ENCODE measurements at regions of chr2 and their contacts with region 1.

Region 1: GRCh38 chr2:121356058-121356640 is 71.1 kb upstream of the TFCP2L1 start:
- DNase-seq: peak; percentile 63 to 83 (median 75)
- H3K4me3 ChIP-seq: no peak overlapping the region
- H3K27ac ChIP-seq: no peak overlapping the region
- H3K4me1 ChIP-seq: no peaks in the 10 kb centered on the region
- H3K27me3 ChIP-seq: no peaks in the 10 kb centered on the region

Region 2: GRCh38 chr2:121076885-121077549 is 279.1 kb before region 1 on chr2:
- CTCF ChIA-PET with region 1: interaction called, 96 read pairs
- POLR2A ChIA-PET with region 1: interaction called, 3 read pairs
- DNase-seq: peak; percentile 55 to 63 (median 61)
- H3K4me3 ChIP-seq: no peak overlapping the region
- H3K27ac ChIP-seq: no peak overlapping the region
- H3K4me1 ChIP-seq: no peaks in the 10 kb centered on the region
- H3K27me3 ChIP-seq: peaks cover 0 to 52% (median 29%) of the 10 kb centered on the region in 5 experiments

Region 3: GRCh38 chr2:121088251-121089165 is 267.6 kb before region 1 on chr2:
- CTCF ChIA-PET with region 1: interaction called, 96 read pairs
- POLR2A ChIA-PET with region 1: no interaction called
- DNase-seq: no peak
- H3K4me3 ChIP-seq: no peak overlapping the region
- H3K27ac ChIP-seq: no peak overlapping the region
- H3K4me1 ChIP-seq: no peaks in the 10 kb centered on the region
- H3K27me3 ChIP-seq: peaks cover 0 to 4% (median 0%) of the 10 kb centered on the region in 5 experiments

Region 4: DNA sequence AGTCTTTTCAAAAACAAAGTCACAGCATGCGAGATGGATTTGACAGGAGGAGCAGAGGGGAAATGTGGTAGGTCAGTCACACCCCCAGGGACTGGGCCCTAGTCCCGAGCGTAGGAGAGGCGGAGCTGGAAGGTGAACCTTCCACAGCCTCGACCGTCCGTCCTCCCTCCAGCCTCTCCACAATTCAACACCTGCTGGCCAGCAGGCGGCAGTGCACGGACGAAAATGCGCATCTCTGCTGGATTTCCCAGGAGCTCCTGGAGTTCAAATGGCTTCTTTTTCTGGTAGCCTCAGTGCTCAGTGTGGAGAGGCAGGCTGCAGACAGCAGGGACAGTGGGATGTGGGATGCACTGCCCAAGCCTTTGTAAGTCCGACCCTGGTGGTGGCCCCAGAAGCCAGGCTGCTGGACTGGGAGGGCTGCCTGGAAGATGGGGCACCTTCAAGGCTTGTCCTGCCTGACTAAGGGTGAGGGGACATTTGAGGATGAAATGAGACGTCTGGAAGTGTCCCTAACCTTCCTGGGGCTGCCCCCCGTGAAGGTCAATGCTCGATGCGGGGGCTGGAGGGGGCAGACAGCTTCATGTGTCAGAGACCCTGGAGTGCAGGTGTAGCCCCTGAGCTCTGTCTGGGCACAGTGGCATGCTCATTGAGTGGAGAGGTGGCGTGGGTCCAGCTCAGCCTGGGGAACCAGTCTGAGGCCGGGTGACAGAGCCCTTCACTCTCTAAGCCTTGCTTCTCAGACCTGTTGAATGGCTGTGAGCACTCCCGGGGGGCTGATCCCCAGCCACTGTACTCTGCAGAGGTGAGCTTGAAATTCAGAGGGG is 260.7 kb before region 1 on chr2:
- CTCF ChIA-PET with region 1: interaction called, 57 read pairs
- POLR2A ChIA-PET with region 1: no interaction called
- DNase-seq: peak; percentile 43 to 67 (median 61)
- H3K4me3 ChIP-seq: no peak overlapping the region
- H3K27ac ChIP-seq: no peak overlapping the region
- H3K4me1 ChIP-seq: no peaks in the 10 kb centered on the region
- H3K27me3 ChIP-seq: peaks cover 0 to 5% (median 1%) of the 10 kb centered on the region in 5 experiments

Region 5: DNA sequence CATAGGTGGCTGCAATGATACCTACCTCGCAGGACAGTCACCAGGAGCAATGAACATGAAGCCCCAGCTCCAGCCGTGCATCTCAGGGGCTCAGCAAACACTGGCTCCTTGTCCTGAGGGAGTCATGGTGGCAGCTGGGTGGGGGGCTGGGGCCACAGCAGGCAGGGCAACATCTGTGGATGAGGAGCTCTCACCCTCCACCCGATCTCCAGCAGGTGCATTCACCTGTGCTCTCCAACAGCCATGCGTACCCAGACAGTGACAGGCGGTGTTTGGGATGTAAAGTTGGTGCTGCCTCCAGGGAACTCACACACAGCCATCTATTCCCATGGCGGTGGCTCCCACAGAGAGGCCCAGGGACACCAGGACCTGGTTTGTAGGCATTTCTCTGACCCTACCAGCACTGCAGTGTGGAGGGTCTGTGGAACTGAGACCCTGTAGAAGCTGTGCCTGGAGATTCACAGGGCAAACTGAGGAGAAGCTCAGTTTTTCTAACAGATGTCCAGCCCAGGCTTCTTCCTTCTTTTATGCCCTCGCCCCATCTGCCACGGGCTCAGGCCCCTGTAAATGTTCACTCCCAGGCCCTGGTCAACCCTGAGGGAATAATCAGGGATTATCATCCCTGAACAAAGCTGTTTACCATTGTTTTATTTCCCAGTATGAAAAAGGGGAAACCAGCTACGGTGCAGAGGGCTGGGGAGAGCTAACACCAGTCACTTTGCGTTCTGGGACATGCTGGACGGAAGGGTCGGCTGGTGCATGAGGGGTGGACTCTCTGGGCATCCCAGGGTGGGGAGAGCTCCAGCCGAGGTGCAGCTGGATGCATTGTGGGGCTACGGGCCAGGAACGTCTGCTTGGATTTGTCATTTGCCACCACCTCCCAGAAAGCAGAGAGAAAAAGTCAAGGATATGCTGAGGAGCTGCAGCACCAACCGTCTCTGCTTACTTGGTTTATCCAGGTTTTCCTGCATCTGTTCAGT is 255.1 kb before region 1 on chr2:
- CTCF ChIA-PET with region 1: interaction called, 57 read pairs
- POLR2A ChIA-PET with region 1: no interaction called
- DNase-seq: no peak
- H3K4me3 ChIP-seq: no peak overlapping the region
- H3K27ac ChIP-seq: no peak overlapping the region
- H3K4me1 ChIP-seq: no peaks in the 10 kb centered on the region
- H3K27me3 ChIP-seq: peaks cover 0 to 7% (median 0%) of the 10 kb centered on the region in 5 experiments

Region 6: GRCh38 chr2:121128754-121129659 is 227.1 kb before region 1 on chr2:
- CTCF ChIA-PET with region 1: interaction called, 44 read pairs
- POLR2A ChIA-PET with region 1: no interaction called
- DNase-seq: peak; percentile 37 to 83 (median 77)
- H3K4me3 ChIP-seq: no peak overlapping the region
- H3K27ac ChIP-seq: no peak overlapping the region
- H3K4me1 ChIP-seq: peaks cover 0 to 13% (median 2%) of the 10 kb centered on the region in 4 experiments
- H3K27me3 ChIP-seq: peaks cover 0 to 2% (median 0%) of the 10 kb centered on the region in 5 experiments

Region 7: GRCh38 chr2:121810959-121811853 is 455.1 kb after region 1 on chr2:
- CTCF ChIA-PET with region 1: no interaction called
- POLR2A ChIA-PET with region 1: no interaction called
- DNase-seq: peak; percentile 38 to 61 (median 50)
- H3K4me3 ChIP-seq: no peak overlapping the region
- H3K27ac ChIP-seq: no peak overlapping the region
- H3K4me1 ChIP-seq: peaks cover 4 to 13% (median 7%) of the 10 kb centered on the region in 4 experiments
- H3K27me3 ChIP-seq: no peaks in the 10 kb centered on the region

Measured in common myeloid progenitor, CD34-positive (primary cell).